ENCODE measurements at regions of chr5 and their contacts with region 1.

Region 1: GRCh38 chr5:135533334-135533733 is 2.4 kb downstream of the NEUROG1 start:
- DNase-seq: no peak
- ATAC-seq: no peak
- H3K4me3 Mint-ChIP-seq: no peak overlapping the region
- H3K27ac Mint-ChIP-seq: no peak overlapping the region
- H3K4me1 Mint-ChIP-seq: peaks cover 5% of the 10 kb centered on the region
- H3K27me3 Mint-ChIP-seq: peaks cover 84% of the 10 kb centered on the region

Region 2: GRCh38 chr5:135386886-135387628 is 146.3 kb before region 1 on chr5:
- CTCF ChIA-PET with region 1: no interaction called
- DNase-seq: no peak
- ATAC-seq: no peak
- H3K4me3 Mint-ChIP-seq: no peak overlapping the region
- H3K27ac Mint-ChIP-seq: no peak overlapping the region
- H3K4me1 Mint-ChIP-seq: peaks cover 34% of the 10 kb centered on the region
- H3K27me3 Mint-ChIP-seq: no peaks in the 10 kb centered on the region

Region 3: GRCh38 chr5:135551593-135552447 is 18.5 kb after region 1 on chr5:
- CTCF ChIA-PET with region 1: interaction called, 11 read pairs
- DNase-seq: peak; percentile 78
- ATAC-seq: peak; percentile 85
- H3K4me3 Mint-ChIP-seq: no peak overlapping the region
- H3K27ac Mint-ChIP-seq: no peak overlapping the region
- H3K4me1 Mint-ChIP-seq: no peaks in the 10 kb centered on the region
- H3K27me3 Mint-ChIP-seq: peaks cover 63% of the 10 kb centered on the region

Measured in activated CD8-positive, alpha-beta memory T cell treated with anti-CD3 and anti-CD28 coated beads, Interleukin-2, amount 10 ng/mL, durations not matched to agents 7 days and 5 days (primary cell).